ENCODE measurements at regions of chr16 and their contacts with region 1.

Region 1: GRCh38 chr16:11742539-11743307 is at the start of gene TXNDC11:
- DNase-seq: peak; percentile 89 to 100
- H3K4me3 ChIP-seq: peak within 1 kb of the TSS; percentile 89
- H3K27ac ChIP-seq: peak within 1 kb of the TSS; percentile 78
- H3K4me1 ChIP-seq: peaks cover 19% of the 10 kb centered on the region
- H3K27me3 ChIP-seq: no peaks in the 10 kb centered on the region
- CTCF ChIP-seq: no peak
- total RNA-seq, gene TXNDC11: 30.9 and 40.9 TPM in 2 replicates

Region 2: DNA sequence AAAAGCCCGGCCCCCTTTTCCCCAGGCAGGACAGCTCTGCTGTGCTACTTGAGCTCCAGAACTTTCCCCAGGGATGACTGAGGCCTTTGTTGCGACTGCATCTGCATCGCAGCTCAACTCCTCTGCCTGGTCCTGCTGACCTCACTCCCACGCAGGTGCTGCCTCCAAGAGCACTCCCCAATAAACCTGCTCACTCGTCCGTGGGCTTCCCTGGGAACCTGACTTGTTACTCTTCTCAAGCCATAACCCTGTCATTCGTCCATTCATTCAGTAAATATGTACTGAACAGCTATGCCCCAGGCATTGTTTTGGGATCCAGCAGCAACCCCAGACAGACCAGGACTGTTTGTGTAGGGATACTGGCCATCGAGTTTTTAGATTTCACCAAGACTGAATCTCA is 409.0 kb before region 1 on chr16:
- CTCF ChIA-PET with region 1: no interaction called
- POLR2A ChIA-PET with region 1: interaction called, 12 read pairs
- intact Hi-C with region 1: no loop called
- DNase-seq: peak; percentile 29 to 92
- H3K4me3 ChIP-seq: no peak overlapping the region
- H3K27ac ChIP-seq: peak overlapping the region; percentile 40; the same call in 1 of the 2 replicates
- H3K4me1 ChIP-seq: peaks cover 21% of the 10 kb centered on the region
- H3K27me3 ChIP-seq: no peaks in the 10 kb centered on the region
- CTCF ChIP-seq: no peak

Region 3: GRCh38 chr16:11755022-11755760 is 12.5 kb after region 1 on chr16:
- CTCF ChIA-PET with region 1: interaction called, 10 read pairs
- POLR2A ChIA-PET with region 1: no interaction called
- intact Hi-C with region 1: no loop called
- DNase-seq: no peak
- H3K4me3 ChIP-seq: no peak overlapping the region
- H3K27ac ChIP-seq: no peak overlapping the region
- H3K4me1 ChIP-seq: no peaks in the 10 kb centered on the region
- H3K27me3 ChIP-seq: no peaks in the 10 kb centered on the region
- CTCF ChIP-seq: no peak

Region 4: DNA sequence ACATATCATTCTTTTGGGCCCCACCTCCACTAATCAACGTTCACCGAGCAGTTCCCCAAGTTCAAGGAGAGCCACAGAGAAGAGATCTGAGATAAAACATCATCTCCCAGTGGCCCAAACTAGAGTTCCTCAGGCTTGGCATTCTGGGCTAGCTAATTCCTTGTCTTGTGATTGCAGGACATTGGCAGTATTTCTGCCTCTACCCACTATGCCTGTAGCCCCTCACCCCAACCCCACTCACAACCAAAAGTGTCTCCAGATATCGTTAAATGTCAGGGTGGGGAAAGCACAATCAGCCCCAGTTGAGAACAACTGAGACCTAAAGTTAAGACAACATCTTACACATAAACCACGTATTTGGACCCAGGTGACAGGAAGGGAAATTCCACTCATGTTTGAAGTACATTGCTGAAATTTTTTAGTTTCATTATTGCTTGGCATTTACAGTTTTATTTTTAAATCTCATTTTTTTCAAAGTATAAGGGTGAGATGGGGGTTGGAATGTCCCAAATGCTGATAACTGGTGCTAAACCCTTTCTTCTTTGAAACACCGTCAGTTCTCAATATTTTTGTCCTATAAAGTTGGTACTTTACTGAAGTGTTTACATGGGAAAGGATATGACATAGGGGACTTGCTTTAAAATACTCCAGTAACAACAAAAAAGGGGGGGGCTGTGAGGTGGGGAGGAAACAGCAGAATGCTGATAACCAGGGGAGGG is 40.8 kb after region 1 on chr16:
- CTCF ChIA-PET with region 1: interaction called, 16 read pairs
- POLR2A ChIA-PET with region 1: no interaction called
- intact Hi-C with region 1: no loop called
- DNase-seq: peak in 1 of 2 experiments; percentile 27
- H3K4me3 ChIP-seq: no peak overlapping the region
- H3K27ac ChIP-seq: no peak overlapping the region; the same call in 1 of the 2 replicates
- H3K4me1 ChIP-seq: no peaks in the 10 kb centered on the region
- H3K27me3 ChIP-seq: no peaks in the 10 kb centered on the region
- CTCF ChIP-seq: no peak

Region 5: GRCh38 chr16:11797166-11797956 is 54.6 kb after region 1 on chr16 and contains the start of gene ZC3H7A:
- CTCF ChIA-PET with region 1: interaction called, 9 read pairs
- POLR2A ChIA-PET with region 1: interaction called, 6 read pairs
- intact Hi-C with region 1: loop called (anchors 5 kb)
- DNase-seq: peak; percentile 89 to 98
- H3K4me3 ChIP-seq: peak within 1 kb of the TSS; percentile 97
- H3K27ac ChIP-seq: peak within 1 kb of the TSS; percentile 73
- H3K4me1 ChIP-seq: peaks cover 15% of the 10 kb centered on the region
- H3K27me3 ChIP-seq: no peaks in the 10 kb centered on the region
- CTCF ChIP-seq: no peak; the same call in 1 of the 2 replicates
- total RNA-seq, gene ZC3H7A: 52.3 and 63.5 TPM in 2 replicates

Region 6: DNA sequence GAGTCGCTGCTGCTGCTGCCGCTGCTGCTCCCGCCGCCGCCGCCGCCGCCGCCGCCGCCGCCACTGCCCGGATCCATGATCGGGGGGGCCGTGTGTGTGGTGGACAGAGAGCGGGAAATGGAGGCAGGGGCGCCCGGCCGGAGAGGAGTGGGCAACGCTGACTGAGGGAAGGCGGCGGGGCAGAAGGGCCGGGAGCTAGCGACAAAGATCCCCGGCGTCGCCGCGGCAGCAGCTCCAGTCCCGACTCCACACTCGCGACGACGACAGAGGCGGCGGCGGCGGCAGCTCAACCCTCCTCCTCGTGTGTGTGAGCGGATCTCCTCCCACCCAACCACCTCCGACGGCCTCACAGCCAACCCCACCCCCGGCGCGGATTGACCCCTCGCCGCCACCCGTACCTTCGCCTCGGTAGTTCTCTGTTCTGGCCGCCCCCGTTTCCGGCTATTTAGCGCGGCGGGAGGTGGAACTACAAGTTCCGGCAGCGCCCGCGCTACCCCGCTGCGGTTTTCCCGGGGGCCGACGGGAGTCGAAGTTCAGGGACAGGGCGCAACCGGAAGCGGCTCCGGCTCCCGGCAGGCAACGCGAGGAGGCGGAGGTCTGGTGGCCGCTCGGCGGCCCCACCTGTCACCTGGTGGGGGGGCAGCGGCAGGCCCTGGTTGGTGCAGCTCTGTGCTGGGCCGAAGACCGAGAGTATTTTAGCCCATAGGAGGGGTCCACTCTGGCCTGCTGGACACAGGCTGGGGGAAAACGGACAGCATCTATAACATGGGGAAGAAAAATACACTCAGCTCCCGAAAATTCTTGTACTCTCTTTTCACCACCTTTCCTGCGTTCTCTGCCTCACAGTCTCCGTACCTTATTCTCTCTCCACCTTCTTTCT is 173.2 kb after region 1 on chr16 and contains the start of gene GSPT1:
- CTCF ChIA-PET with region 1: no interaction called
- POLR2A ChIA-PET with region 1: no interaction called
- intact Hi-C with region 1: loop called (anchors 2 kb)
- DNase-seq: peak; percentile 95 to 100
- H3K4me3 ChIP-seq: peak within 1 kb of the TSS; percentile 93
- H3K27ac ChIP-seq: peak within 1 kb of the TSS; percentile 97
- H3K4me1 ChIP-seq: peaks cover 40% of the 10 kb centered on the region
- H3K27me3 ChIP-seq: no peaks in the 10 kb centered on the region
- CTCF ChIP-seq: 0 out of 2 replicates have a peak, but pooled peaks have one; percentile 22
- total RNA-seq, gene GSPT1: 146 and 161 TPM in 2 replicates

Region 7: DNA sequence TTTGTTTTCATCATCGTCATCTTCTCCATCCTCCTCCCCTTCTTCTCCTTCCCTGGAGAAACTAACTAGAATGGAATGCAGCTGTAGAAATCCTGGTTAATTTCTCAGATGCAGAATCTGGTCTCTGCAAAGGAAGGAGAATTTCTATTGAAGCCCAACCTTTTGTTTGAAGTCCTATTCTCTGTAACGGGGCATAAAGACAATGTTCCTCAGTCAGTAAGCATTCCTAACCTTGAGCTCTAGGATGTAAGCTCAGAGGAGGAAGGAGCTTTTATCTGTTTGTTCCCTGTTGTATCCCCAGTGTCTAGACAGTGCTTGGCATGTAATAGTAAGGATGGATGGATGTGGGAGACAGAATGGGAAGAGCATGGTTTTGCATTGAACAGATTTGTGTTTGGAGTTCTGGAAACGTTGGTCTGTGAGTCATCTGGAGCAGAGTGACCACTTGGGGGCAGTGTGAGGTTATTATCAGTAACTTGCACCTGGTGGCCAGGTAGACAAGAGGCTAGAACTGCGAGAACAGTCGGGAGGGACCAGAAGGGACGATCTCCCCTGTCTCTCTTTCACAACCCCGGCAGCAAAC is 597.5 kb after region 1 on chr16:
- CTCF ChIA-PET with region 1: no interaction called
- POLR2A ChIA-PET with region 1: no interaction called
- intact Hi-C with region 1: loop called (anchors 10 kb)
- DNase-seq: peak in 1 of 2 experiments; percentile 14
- H3K4me3 ChIP-seq: no peak overlapping the region
- H3K27ac ChIP-seq: peak overlapping the region; percentile 71; the same call in 1 of the 2 replicates
- H3K4me1 ChIP-seq: peaks cover 30% of the 10 kb centered on the region
- H3K27me3 ChIP-seq: no peaks in the 10 kb centered on the region
- CTCF ChIP-seq: peak; percentile 69

Region 8: DNA sequence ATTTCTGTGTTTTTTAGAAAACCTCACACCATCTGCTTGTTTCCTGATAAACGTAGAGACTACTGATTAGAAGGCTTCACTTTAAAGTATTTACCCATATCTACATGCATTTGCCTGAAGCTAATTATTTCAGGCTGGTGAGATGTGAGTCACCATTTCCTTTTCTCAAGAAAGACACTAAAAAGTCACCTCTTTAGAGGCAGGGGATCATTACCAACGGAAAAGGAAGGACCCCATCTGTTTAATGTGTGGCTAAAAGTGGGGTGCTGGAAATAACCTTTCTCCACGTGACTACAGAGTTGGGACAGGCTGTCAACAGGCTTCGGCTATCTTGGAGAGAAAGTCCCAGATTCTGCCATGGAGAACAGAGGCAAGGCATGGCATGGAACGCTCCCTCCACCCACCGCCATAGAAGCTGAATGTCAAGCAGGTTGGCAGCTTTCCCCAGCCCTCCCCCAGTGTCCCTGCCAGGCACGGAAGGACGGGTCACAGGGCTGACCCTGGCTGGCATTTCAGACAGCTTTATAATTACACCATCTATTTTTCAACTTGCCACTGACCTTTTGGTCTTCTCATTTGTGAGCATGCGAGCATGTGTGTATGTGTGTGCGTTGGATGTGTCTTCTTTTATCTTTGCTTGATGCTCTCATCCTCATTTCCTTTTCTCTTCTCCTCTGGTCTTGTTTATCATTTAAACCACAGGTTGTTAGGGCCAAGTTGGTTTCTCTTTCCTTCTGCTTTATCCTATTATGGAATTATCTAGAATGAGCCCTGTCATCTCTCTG is 904.0 kb after region 1 on chr16:
- CTCF ChIA-PET with region 1: no interaction called
- POLR2A ChIA-PET with region 1: no interaction called
- intact Hi-C with region 1: no loop called
- DNase-seq: peak in 1 of 2 experiments; percentile 58
- H3K4me3 ChIP-seq: no peak overlapping the region
- H3K27ac ChIP-seq: no peak overlapping the region
- H3K4me1 ChIP-seq: no peaks in the 10 kb centered on the region
- H3K27me3 ChIP-seq: no peaks in the 10 kb centered on the region
- CTCF ChIP-seq: no peak